Dorsolateral prefrontal cortex (tissue), 120 donors: ENCODE measurements at regions of chr19 and their contacts with region 1.

Region 1: DNA sequence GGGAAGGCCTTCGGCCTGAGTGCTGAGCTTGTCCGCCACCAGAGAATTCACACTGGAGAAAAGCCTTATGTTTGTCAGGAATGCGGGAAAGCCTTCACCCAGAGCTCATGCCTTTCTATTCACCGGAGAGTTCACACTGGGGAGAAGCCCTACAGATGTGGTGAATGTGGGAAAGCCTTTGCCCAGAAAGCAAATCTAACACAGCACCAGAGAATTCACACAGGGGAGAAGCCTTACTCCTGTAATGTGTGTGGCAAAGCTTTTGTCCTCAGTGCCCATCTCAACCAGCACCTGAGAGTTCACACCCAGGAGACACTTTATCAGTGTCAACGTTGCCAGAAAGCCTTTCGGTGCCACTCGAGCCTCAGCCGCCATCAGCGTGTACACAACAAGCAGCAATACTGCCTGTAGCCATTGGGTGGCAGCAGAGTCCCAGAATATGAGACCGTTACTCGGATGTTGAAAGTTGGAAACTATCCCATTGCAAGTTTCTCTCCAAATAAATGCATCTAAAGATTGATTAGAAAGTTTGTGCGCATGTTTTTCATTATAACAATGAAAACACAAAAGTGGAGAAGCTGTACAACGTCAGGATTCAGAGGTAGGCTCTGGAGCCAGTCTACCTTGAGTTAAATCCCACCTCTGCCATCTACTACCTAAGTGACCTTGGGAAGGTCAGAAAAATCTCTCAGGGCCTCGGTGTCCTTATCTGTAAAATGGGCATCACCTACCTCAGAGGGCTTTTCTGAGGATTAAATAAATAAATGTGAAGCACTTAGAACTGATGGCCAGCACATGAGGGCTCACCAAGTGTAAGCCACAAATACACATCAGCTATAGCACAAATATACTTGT is 21.1 kb downstream of the ZNF473 start:
- DNase-seq: peak; percentile 64 to 88 (median 77)
- H3K4me3 ChIP-seq: no peak overlapping the region
- H3K27ac ChIP-seq: peak overlapping the region in 1 of 59 donors; percentile 20
- H3K27me3 ChIP-seq: no peaks in the 10 kb centered on the region
- CTCF ChIP-seq: peak; percentile 67 to 97 (median 92)

Region 2: DNA sequence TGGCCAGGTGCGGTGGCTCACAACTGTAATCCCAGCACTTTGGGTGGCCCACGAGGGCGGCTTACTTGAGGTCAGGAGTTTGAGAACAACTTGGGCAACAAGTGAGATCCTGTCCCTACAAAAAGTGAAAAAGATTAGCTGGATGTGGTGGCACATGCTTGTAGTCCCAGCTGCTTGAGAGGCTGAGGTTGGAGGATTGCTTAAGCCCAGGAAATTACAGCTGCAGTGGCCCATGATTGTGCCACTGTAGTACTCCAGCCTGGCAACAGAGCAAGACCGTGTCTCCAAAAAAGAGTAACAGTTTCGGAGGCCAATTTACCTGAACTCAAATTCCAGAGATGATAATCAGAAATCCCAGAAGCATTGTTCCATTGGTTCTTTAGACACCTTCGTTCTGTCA is 16.7 kb before region 1 on chr19:
- intact Hi-C with region 1: no loop called
- DNase-seq: no peak
- H3K4me3 ChIP-seq: no peak overlapping the region
- H3K27ac ChIP-seq: no peak overlapping the region
- H3K27me3 ChIP-seq: no peaks in the 10 kb centered on the region
- CTCF ChIP-seq: no peak

Region 3: GRCh38 chr19:50147462-50148423 is 100.9 kb after region 1 on chr19:
- intact Hi-C with region 1: loop called in 1 of 2 experiments (anchors 10 kb)
- DNase-seq: peak; percentile 75 to 96 (median 90)
- H3K4me3 ChIP-seq: peak overlapping the region; percentile 56 to 100 (median 77)
- H3K27ac ChIP-seq: peak overlapping the region; percentile 23 to 96 (median 84)
- H3K27me3 ChIP-seq: no peaks in the 10 kb centered on the region
- CTCF ChIP-seq: peak in 54 of 56 donors; percentile 19 to 70 (median 50)

Region 4: GRCh38 chr19:50162988-50163387 is 116.1 kb after region 1 on chr19 and contains the start of gene IZUMO2:
- intact Hi-C with region 1: no loop called
- DNase-seq: no peak
- H3K4me3 ChIP-seq: peak within 1 kb of the TSS in 24 of 59 donors; percentile 10 to 53 (median 26)
- H3K27ac ChIP-seq: no peak within 1 kb of the TSS
- H3K27me3 ChIP-seq: peaks cover 0 to 43% (median 7%) of the 10 kb centered on the region in 45 donors
- CTCF ChIP-seq: no peak
- total RNA-seq, gene IZUMO2: 0.56 to 0.85 (median 0.67) TPM in 6 of 120 experiments, not detected in the others